Psoas muscle (tissue), 8 donors: ENCODE measurements at regions of chr2 and their contacts with region 1.

Region 1: GRCh38 chr2:30711646-30712085 is 95.6 kb downstream of the CAPN13 start:
- DNase-seq: peak; percentile 72 to 85
- ATAC-seq: peak; percentile 85 to 90 (median 86)
- H3K4me3 ChIP-seq: no peak overlapping the region
- H3K27ac ChIP-seq: no peak overlapping the region
- H3K4me1 ChIP-seq: no peaks in the 10 kb centered on the region
- H3K27me3 ChIP-seq: no peaks in the 10 kb centered on the region
- CTCF ChIP-seq: peak; percentile 98

Region 2: DNA sequence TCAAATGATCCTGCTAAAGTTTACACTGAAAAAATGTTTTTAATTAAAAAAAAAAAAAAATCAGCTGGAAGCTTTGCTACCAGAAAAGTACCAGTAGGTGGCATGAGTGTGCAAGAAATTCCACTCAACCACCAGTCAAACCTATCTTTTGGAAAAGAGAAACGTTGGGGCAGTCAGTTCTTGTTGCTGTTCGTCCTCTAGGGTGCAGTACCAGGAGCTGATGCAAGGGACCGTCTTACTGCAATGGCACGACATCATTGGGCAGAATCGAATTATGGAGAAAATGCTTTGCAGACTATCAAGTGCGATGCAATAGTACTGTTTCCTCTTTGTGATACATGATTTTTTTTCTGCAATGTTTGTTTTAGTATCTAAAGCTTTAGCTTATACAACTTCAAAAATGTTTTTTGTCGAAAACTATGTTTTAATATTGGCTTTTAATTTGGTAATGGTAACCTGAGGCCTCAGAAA is 546.6 kb before region 1 on chr2:
- intact Hi-C with region 1: loop called (anchors 2 to 5 kb)
- DNase-seq: no peak
- ATAC-seq: peak; percentile 76 to 94 (median 92)
- H3K4me3 ChIP-seq: no peak overlapping the region
- H3K27ac ChIP-seq: no peak overlapping the region
- H3K4me1 ChIP-seq: peaks cover 11% of the 10 kb centered on the region
- H3K27me3 ChIP-seq: no peaks in the 10 kb centered on the region
- CTCF ChIP-seq: peak; percentile 79

Region 3: DNA sequence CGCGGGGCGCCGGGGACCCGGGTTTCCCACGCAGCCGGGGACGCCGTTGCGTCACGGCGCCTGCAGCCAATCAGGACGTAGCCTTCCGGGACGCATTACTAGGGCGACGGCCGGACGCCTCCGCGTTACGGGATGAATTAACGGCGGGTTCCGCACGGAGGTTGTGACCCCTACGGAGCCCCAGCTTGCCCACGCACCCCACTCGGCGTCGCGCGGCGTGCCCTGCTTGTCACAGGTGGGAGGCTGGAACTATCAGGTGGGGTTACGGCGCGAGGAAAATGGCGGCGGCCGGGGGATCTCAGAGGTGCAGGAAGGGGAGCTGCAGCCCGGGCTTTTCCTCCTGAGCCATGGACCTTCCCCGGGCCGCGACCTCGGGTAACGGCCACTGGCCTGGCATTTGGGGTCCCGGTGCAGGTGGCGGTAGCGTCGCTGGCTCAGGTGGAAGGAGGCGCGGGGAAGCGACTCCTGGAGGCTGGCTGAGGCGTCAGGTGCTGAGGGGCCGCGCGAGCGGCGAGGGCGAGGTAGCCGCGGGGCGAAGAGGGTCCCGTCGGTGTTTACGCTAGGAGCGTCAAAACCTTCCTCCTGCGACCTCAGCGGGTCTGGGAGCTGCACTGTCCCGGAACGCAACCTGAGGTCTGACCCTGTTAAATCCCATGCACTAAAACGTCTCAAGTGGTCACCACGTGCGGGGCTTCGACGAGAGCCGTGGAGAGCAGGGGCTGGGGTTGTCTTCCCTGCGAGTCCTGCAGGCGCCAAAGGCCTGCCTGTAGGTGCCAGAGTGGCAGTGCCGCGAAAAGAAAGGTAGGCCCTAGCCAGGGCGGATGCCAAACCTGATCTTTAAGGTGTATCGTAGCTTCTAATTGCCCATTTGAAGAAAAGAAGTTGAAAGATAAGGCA is 264.3 kb before region 1 on chr2 and contains the start of gene LCLAT1:
- intact Hi-C with region 1: loop called (anchors 10 kb)
- DNase-seq: peak; percentile 84 to 90
- ATAC-seq: peak; percentile 93 to 97 (median 94)
- H3K4me3 ChIP-seq: peak within 1 kb of the TSS; percentile 99
- H3K27ac ChIP-seq: peak within 1 kb of the TSS; percentile 79
- H3K4me1 ChIP-seq: peaks cover 13% of the 10 kb centered on the region
- H3K27me3 ChIP-seq: no peaks in the 10 kb centered on the region
- CTCF ChIP-seq: no peak
- total RNA-seq, gene LCLAT1: 5.5 to 18.8 (median 8.2) TPM

Region 4: DNA sequence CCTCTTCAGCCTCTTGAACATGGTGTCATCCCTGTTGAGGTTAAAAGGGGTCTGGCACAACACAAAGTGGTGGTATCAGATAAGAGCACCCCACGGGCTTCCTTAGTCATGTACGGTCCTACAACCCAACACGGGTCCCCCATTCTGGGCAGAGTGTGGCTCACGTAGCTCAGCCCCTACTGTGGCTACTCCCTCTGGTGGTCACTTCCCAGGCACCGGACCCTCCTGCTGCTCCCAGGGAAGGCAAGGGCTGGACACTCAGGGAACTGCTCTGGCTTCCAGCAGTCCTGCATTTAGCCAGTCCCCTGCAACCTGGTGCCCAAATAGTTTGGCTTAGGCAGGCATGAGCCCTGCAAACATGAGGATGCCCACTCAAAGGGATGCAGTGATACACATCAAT is 368.0 kb after region 1 on chr2:
- intact Hi-C with region 1: loop called in 1 of 2 experiments (anchors 10 kb)
- DNase-seq: no peak
- ATAC-seq: no peak
- H3K4me3 ChIP-seq: no peak overlapping the region
- H3K27ac ChIP-seq: no peak overlapping the region
- H3K4me1 ChIP-seq: no peaks in the 10 kb centered on the region
- H3K27me3 ChIP-seq: no peaks in the 10 kb centered on the region
- CTCF ChIP-seq: no peak

Region 5: DNA sequence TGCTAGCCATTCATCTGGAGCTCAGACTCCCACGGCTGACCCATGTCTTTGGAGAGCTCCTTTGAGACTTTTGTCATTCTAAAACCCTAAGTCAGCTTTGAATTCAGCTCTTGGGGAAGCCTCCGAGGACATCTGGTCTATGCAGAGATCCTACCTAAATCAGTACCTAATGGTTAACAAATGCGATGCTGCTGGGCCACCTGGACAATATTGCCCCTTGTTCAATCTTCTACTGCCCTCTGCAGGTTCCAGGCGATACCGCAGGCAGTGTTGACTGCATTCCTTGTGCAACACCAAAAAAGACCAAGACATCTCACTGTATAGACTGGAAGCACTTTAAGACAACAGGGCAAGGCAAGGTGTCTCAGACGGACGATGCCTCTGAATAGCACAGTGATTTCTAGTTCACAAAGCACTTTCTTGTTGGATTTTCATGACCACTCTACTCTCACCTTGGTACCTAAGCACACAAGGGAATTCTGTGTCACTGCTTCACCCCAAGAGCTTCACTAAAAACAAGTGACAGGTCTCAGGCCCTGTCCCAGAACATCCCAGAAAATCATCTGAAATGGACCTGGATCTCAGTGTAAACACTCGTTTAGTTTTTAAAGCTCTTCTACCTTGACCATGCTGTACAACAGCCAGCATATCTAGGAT is 622.0 kb after region 1 on chr2:
- intact Hi-C with region 1: loop called (anchors 2 kb)
- DNase-seq: peak; percentile 70 to 86
- ATAC-seq: peak; percentile 84 to 95 (median 92)
- H3K4me3 ChIP-seq: no peak overlapping the region
- H3K27ac ChIP-seq: peak overlapping the region; percentile 50
- H3K4me1 ChIP-seq: peaks cover 5% of the 10 kb centered on the region
- H3K27me3 ChIP-seq: no peaks in the 10 kb centered on the region
- CTCF ChIP-seq: peak; percentile 97

Region 6: GRCh38 chr2:31523871-31524492 is 812.3 kb after region 1 on chr2:
- intact Hi-C with region 1: loop called (anchors 5 kb)
- DNase-seq: no peak
- ATAC-seq: peak in 1 of 4 donors; percentile 58
- H3K4me3 ChIP-seq: no peak overlapping the region
- H3K27ac ChIP-seq: no peak overlapping the region
- H3K4me1 ChIP-seq: no peaks in the 10 kb centered on the region
- H3K27me3 ChIP-seq: no peaks in the 10 kb centered on the region
- CTCF ChIP-seq: peak; percentile 64